ENCODE measurements at regions of chr20 and their contacts with region 1.

Region 1: DNA sequence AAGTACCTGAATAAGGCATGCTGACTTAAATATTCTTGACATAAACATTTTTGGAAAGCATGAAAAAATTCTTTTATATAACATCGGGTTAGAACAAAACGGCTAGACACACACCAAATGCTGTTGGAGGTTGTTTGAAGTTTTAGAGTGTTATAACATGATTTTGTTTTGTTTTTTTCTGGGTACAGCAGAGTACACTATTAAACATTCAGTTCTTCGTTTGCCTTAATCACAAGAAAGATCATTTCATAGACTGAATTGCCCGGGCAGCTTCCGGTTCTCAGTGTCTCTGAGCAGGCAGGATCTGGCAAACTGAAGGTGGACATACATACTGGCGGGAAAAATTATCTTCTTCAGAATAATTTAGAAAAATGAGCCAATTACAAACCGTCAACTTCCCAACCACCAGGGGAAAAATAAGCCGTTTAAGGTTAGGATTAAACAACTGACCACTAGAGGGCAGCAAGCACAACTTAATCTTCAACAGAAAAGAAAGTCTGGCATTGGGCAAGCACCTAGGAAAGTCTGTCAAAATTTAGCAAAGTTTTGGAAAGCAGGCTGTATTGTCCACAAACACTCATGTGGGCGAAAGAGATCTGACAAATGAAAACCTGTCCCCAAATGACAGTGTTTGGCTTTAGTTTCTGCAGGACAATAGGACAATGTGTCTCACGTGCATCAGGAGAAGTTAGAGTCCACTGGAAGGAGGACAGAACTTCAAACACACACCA is 15.0 kb downstream of the ZNF217 start:
- DNase-seq: peak; percentile 80 to 93
- H3K4me3 ChIP-seq: no peak overlapping the region
- H3K4me3 Mint-ChIP-seq: peak overlapping the region; percentile 23
- H3K27ac Mint-ChIP-seq: peak overlapping the region; percentile 78
- H3K4me1 ChIP-seq: peaks cover 39% of the 10 kb centered on the region
- H3K4me1 Mint-ChIP-seq: peaks cover 26% of the 10 kb centered on the region
- H3K27me3 ChIP-seq: no peaks in the 10 kb centered on the region
- H3K27me3 Mint-ChIP-seq: no peaks in the 10 kb centered on the region
- CTCF ChIP-seq: peak; percentile 98 to 99

Region 2: DNA sequence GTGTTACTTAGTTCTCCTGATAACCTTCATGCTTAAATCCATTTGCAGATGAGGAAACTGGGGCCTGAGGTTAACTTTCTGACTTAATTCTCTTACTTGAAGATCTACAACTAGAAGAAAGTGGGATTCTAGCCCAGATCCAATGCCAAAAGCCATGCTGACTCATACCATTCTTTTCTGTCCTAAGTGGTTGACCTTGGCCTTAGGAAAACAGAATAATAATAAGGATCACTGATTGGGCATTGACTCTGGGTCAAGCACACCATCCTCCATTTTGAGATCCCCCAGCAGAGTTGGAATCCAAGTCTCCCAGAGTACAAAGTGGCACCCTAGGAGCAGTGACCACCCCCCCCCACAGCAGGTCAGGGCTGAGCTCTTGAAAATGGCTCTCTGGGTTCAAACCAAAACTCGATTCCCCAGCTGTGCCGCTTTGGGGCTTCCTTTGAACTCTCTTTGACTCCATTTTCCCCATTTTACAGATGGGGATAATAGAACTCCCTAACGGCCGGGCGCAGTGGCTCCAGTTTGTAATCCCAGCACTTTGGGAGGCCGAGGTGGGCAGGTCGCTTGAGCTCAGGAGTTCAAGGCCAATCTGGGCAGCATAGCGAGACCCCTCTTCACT is 27.8 kb after region 1 on chr20:
- CTCF ChIA-PET with region 1: no interaction called
- POLR2A ChIA-PET with region 1: no interaction called
- intact Hi-C with region 1: no loop called
- DNase-seq: peak in 1 of 2 experiments; percentile 23
- H3K4me3 ChIP-seq: no peak overlapping the region
- H3K4me3 Mint-ChIP-seq: no peak overlapping the region
- H3K27ac Mint-ChIP-seq: no peak overlapping the region
- H3K4me1 ChIP-seq: peaks cover 4% of the 10 kb centered on the region
- H3K4me1 Mint-ChIP-seq: peaks cover 16% of the 10 kb centered on the region
- H3K27me3 ChIP-seq: no peaks in the 10 kb centered on the region
- H3K27me3 Mint-ChIP-seq: no peaks in the 10 kb centered on the region
- CTCF ChIP-seq: no peak

Region 3: GRCh38 chr20:53643031-53643832 is 64.6 kb after region 1 on chr20:
- CTCF ChIA-PET with region 1: no interaction called
- POLR2A ChIA-PET with region 1: no interaction called
- intact Hi-C with region 1: loop called (anchors 5 kb)
- DNase-seq: peak; percentile 37 to 54
- H3K4me3 ChIP-seq: no peak overlapping the region
- H3K4me3 Mint-ChIP-seq: no peak overlapping the region
- H3K27ac Mint-ChIP-seq: peak overlapping the region; percentile 28
- H3K4me1 ChIP-seq: peaks cover 30% of the 10 kb centered on the region
- H3K4me1 Mint-ChIP-seq: peaks cover 31% of the 10 kb centered on the region
- H3K27me3 ChIP-seq: no peaks in the 10 kb centered on the region
- H3K27me3 Mint-ChIP-seq: no peaks in the 10 kb centered on the region
- CTCF ChIP-seq: no peak

Region 4: GRCh38 chr20:53708129-53708968 is 129.7 kb after region 1 on chr20:
- CTCF ChIA-PET with region 1: no interaction called
- POLR2A ChIA-PET with region 1: interaction called, 3 read pairs
- intact Hi-C with region 1: loop called (anchors 2 kb)
- DNase-seq: peak; percentile 54 to 71
- H3K4me3 ChIP-seq: no peak overlapping the region
- H3K4me3 Mint-ChIP-seq: peak overlapping the region; percentile 39
- H3K27ac Mint-ChIP-seq: peak overlapping the region; percentile 66
- H3K4me1 ChIP-seq: peaks cover 47% of the 10 kb centered on the region
- H3K4me1 Mint-ChIP-seq: peaks cover 43% of the 10 kb centered on the region
- H3K27me3 ChIP-seq: no peaks in the 10 kb centered on the region
- H3K27me3 Mint-ChIP-seq: no peaks in the 10 kb centered on the region
- CTCF ChIP-seq: no peak

Region 5: GRCh38 chr20:53763707-53764414 is 185.2 kb after region 1 on chr20:
- CTCF ChIA-PET with region 1: interaction called, 8 read pairs
- POLR2A ChIA-PET with region 1: interaction called, 3 read pairs
- intact Hi-C with region 1: loop called (anchors 1 kb)
- DNase-seq: peak; percentile 95 to 97
- H3K4me3 ChIP-seq: peak overlapping the region; percentile 26
- H3K4me3 Mint-ChIP-seq: peak overlapping the region; percentile 82
- H3K27ac Mint-ChIP-seq: peak overlapping the region; percentile 99
- H3K4me1 ChIP-seq: peaks cover 61% of the 10 kb centered on the region
- H3K4me1 Mint-ChIP-seq: peaks cover 55% of the 10 kb centered on the region
- H3K27me3 ChIP-seq: no peaks in the 10 kb centered on the region
- H3K27me3 Mint-ChIP-seq: no peaks in the 10 kb centered on the region
- CTCF ChIP-seq: peak; percentile 33 to 35

Region 6: GRCh38 chr20:53869466-53870258 is 291.0 kb after region 1 on chr20:
- CTCF ChIA-PET with region 1: interaction called, 7 read pairs
- POLR2A ChIA-PET with region 1: no interaction called
- intact Hi-C with region 1: loop called (anchors 1 kb)
- DNase-seq: peak; percentile 94
- H3K4me3 ChIP-seq: no peak overlapping the region
- H3K4me3 Mint-ChIP-seq: peak overlapping the region; percentile 29
- H3K27ac Mint-ChIP-seq: peak overlapping the region; percentile 45
- H3K4me1 ChIP-seq: peaks cover 59% of the 10 kb centered on the region
- H3K4me1 Mint-ChIP-seq: peaks cover 63% of the 10 kb centered on the region
- H3K27me3 ChIP-seq: no peaks in the 10 kb centered on the region
- H3K27me3 Mint-ChIP-seq: no peaks in the 10 kb centered on the region
- CTCF ChIP-seq: peak; percentile 99 to 100

Region 7: GRCh38 chr20:54062812-54063280 is 484.2 kb after region 1 on chr20:
- CTCF ChIA-PET with region 1: no interaction called
- POLR2A ChIA-PET with region 1: no interaction called
- intact Hi-C with region 1: loop called (anchors 1 kb)
- DNase-seq: peak in 1 of 2 experiments; percentile 63
- H3K4me3 ChIP-seq: no peak overlapping the region
- H3K4me3 Mint-ChIP-seq: no peak overlapping the region
- H3K27ac Mint-ChIP-seq: no peak overlapping the region
- H3K4me1 ChIP-seq: peaks cover 19% of the 10 kb centered on the region
- H3K4me1 Mint-ChIP-seq: peaks cover 5% of the 10 kb centered on the region
- H3K27me3 ChIP-seq: no peaks in the 10 kb centered on the region
- H3K27me3 Mint-ChIP-seq: no peaks in the 10 kb centered on the region
- CTCF ChIP-seq: peak; percentile 92